Prostate gland (tissue), 2 donors: ENCODE measurements at regions of chr6 and their contacts with region 1.

Region 1: GRCh38 chr6:151765444-151765886 is 42.0 kb upstream of the ESR1 start:
- DNase-seq: peak; percentile 50
- H3K4me3 ChIP-seq: no peak overlapping the region
- H3K27ac ChIP-seq: no peak overlapping the region
- H3K4me1 ChIP-seq: no peaks in the 10 kb centered on the region
- H3K27me3 ChIP-seq: no peaks in the 10 kb centered on the region
- CTCF ChIP-seq: peak; percentile 38 to 77 (median 70)
- POLR2A ChIP-seq: no peak

Region 2: DNA sequence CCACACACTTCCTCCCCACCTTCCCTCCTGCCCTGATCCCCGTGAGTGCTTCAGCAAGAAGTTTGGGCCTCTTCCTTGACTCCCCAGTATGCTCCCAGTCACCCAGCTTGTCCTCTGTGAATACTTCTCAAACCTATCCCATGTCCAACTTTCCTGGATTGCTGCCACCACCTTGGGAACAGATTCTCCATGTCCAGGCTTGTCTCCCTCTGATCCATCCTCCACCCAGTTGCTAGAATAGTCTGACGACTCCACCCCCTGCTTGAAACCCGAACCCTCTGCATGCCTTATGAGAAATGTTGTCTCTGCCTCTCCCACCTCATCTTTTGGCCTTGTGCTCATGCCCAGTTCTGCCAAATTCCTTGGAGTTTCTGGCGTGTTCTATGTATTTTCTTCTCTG is 1514.6 kb before region 1 on chr6:
- intact Hi-C with region 1: no loop called
- DNase-seq: peak; percentile 81
- H3K4me3 ChIP-seq: no peak overlapping the region
- H3K27ac ChIP-seq: peak overlapping the region; percentile 15 to 38
- H3K4me1 ChIP-seq: no peaks in the 10 kb centered on the region
- H3K27me3 ChIP-seq: no peaks in the 10 kb centered on the region
- CTCF ChIP-seq: no peak
- POLR2A ChIP-seq: no peak

Region 3: GRCh38 chr6:152049502-152049901 is 284.0 kb after region 1 on chr6:
- intact Hi-C with region 1: no loop called
- DNase-seq: no peak
- H3K4me3 ChIP-seq: no peak overlapping the region
- H3K27ac ChIP-seq: no peak overlapping the region
- H3K4me1 ChIP-seq: no peaks in the 10 kb centered on the region
- H3K27me3 ChIP-seq: no peaks in the 10 kb centered on the region
- CTCF ChIP-seq: no peak
- POLR2A ChIP-seq: no peak

Region 4: DNA sequence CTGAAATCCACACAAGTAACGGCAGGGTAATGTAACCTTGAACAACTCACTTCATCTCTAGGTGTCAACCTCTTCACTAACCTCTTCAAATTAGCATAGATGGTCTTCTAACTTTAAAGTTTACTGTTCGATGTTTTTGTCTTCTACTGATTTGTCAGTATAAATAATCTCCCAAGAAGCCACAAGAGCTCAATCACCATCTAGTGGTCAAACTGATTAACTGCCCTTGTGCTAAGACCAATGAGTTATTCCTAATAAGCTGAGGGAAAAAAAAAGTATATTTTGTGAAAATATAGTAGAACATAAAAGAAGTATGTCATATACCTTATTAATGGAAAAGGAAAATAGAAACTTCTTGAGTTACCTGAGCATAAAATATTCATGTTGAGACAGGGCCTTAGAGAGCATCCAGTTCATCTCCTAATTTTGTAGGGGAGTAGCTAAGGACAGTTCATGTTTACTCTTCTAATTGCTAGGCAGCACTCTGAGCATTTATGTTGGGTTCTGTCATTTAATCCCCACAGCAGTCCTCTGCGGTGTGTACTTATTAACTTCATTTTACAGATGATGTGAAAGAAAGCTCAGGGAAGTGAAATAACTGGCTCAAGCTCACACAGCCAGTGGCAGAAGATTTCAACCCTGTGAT is 359.1 kb after region 1 on chr6:
- intact Hi-C with region 1: loop called (anchors 1 kb)
- DNase-seq: peak; percentile 24
- H3K4me3 ChIP-seq: no peak overlapping the region
- H3K27ac ChIP-seq: no peak overlapping the region
- H3K4me1 ChIP-seq: no peaks in the 10 kb centered on the region
- H3K27me3 ChIP-seq: no peaks in the 10 kb centered on the region
- CTCF ChIP-seq: peak; percentile 23 to 92 (median 76)
- POLR2A ChIP-seq: no peak